Activated CD4-positive, alpha-beta T cell treated with anti-CD3 and anti-CD28 coated beads, Interleukin-2, amount 10 ng/mL, durations not matched to agents 24 days and 14 days (primary cell): ENCODE measurements at regions of chr17 and their contacts with region 1.

Region 1: GRCh38 chr17:12020642-12021622 is at the start of gene MAP2K4:
- DNase-seq: peak; percentile 99
- H3K4me3 Mint-ChIP-seq: peak within 1 kb of the TSS; percentile 79
- H3K27ac Mint-ChIP-seq: no peak within 1 kb of the TSS
- H3K4me1 Mint-ChIP-seq: peaks cover 31% of the 10 kb centered on the region
- H3K27me3 Mint-ChIP-seq: peaks cover 13% of the 10 kb centered on the region
- total RNA-seq, gene MAP2K4: 32.7 and 35.2 TPM in 2 replicates

Region 2: DNA sequence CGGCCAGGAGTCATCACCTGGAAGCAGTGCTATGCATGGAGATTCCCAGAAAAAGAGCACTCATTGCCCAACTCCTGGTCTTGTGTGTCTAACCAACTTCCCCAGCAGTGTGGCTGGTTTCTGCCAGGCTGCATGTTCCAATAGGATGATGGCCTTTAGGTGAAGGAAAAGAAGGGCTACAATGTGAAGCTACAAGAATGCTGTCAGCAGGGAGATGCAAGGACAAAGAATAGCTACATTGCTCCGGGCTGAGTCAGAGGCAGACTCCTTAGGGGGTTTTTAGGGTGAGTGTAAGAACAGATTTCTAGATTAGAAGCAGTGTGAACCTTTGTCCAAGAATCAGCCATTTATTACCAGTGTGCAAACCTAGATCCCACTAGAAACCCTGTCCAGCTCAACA is 485.7 kb before region 1 on chr17:
- intact Hi-C with region 1: no loop called
- DNase-seq: no peak
- H3K4me3 Mint-ChIP-seq: no peak overlapping the region
- H3K27ac Mint-ChIP-seq: no peak overlapping the region
- H3K4me1 Mint-ChIP-seq: no peaks in the 10 kb centered on the region
- H3K27me3 Mint-ChIP-seq: no peaks in the 10 kb centered on the region

Region 3: GRCh38 chr17:11986942-11987329 is 34.0 kb before region 1 on chr17:
- intact Hi-C with region 1: loop called (anchors 5 kb)
- DNase-seq: no peak
- H3K4me3 Mint-ChIP-seq: no peak overlapping the region
- H3K27ac Mint-ChIP-seq: no peak overlapping the region
- H3K4me1 Mint-ChIP-seq: peaks cover 5% of the 10 kb centered on the region
- H3K27me3 Mint-ChIP-seq: no peaks in the 10 kb centered on the region

Region 4: DNA sequence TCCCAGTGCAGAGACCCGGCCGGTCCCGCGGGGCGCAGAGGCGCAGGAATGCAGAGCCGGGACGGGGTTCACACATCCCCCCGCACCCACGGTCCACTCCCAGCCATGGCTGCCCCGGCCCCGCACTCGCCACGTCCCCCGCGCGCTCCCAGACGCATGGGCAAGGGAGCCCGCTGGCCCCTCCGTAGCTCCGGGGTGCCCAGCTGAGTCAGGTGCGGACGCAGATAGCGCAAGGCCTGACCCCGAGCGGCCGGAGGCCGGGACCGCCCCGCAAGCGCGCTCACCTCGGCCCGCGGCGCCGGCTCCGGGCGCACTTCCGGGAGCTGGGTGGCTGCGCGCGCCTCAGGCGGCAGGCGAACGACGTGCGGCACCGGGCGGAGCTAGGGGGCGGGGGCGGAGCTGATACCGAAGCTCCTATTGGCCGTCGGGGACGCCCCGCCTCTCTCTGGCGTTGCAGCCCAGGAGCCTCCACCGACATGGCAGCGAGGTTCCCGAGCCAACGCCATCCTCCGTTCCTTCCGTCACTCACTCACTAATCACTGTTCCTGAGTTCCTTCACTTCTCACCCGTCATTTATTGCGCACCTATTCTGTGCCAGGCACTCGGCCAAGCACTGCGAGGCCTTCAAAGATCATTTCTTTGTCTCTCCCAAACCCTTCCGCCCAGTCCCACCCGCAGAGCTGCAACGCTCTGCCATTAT is 23.6 kb before region 1 on chr17 and contains the start of gene ZNF18:
- intact Hi-C with region 1: loop called (anchors 1 kb)
- DNase-seq: peak; percentile 99
- H3K4me3 Mint-ChIP-seq: peak within 1 kb of the TSS; percentile 97
- H3K27ac Mint-ChIP-seq: peak within 1 kb of the TSS; percentile 94
- H3K4me1 Mint-ChIP-seq: peaks cover 16% of the 10 kb centered on the region
- H3K27me3 Mint-ChIP-seq: no peaks in the 10 kb centered on the region
- total RNA-seq, gene ZNF18: 8.0 and 9.3 TPM in 2 replicates

Region 5: GRCh38 chr17:12041316-12041715 is 20.4 kb after region 1 on chr17:
- intact Hi-C with region 1: loop called (anchors 1 kb)
- DNase-seq: no peak
- H3K4me3 Mint-ChIP-seq: no peak overlapping the region
- H3K27ac Mint-ChIP-seq: no peak overlapping the region
- H3K4me1 Mint-ChIP-seq: peaks cover 13% of the 10 kb centered on the region
- H3K27me3 Mint-ChIP-seq: no peaks in the 10 kb centered on the region